A673 (cell line): ENCODE measurements at regions of chr17 and their contacts with region 1.

Region 1: DNA sequence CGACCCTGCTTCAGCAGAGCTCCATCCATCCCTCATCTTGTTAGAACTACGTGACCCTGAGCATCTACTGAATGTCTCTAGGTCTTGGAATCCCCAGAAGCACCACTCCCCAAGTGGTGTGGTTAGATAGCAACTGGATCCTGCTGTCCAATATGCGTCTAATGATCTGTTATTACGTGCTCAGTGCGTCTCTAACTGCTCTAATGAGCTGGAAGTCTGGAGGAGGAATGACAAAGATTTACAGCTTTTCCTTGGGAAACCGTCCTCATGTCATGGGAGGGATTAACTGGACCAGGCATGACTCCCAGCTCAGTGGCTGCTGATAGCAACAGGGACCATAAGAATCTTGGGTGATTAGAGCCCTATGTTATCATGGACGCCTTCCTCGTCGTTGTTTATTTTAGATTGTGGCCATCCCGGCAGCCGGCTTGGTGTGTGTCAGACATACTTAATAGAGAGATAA is 150.9 kb downstream of the HS3ST3B1 start:
- DNase-seq: no peak
- H3K4me3 ChIP-seq: no peak overlapping the region
- H3K27ac ChIP-seq: no peak overlapping the region
- H3K4me1 ChIP-seq: no peaks in the 10 kb centered on the region
- H3K27me3 ChIP-seq: no peaks in the 10 kb centered on the region
- CTCF ChIP-seq: no peak

Region 2: GRCh38 chr17:14396547-14396946 is 55.2 kb before region 1 on chr17:
- CTCF ChIA-PET with region 1: no interaction called
- POLR2A ChIA-PET with region 1: no interaction called
- intact Hi-C with region 1: loop called (anchors 10 kb)
- DNase-seq: no peak
- H3K4me3 ChIP-seq: no peak overlapping the region
- H3K27ac ChIP-seq: no peak overlapping the region
- H3K4me1 ChIP-seq: no peaks in the 10 kb centered on the region
- H3K27me3 ChIP-seq: no peaks in the 10 kb centered on the region
- CTCF ChIP-seq: no peak

Region 3: GRCh38 chr17:14672830-14673229 is 221.1 kb after region 1 on chr17:
- CTCF ChIA-PET with region 1: no interaction called
- POLR2A ChIA-PET with region 1: no interaction called
- intact Hi-C with region 1: no loop called
- DNase-seq: no peak
- H3K4me3 ChIP-seq: no peak overlapping the region
- H3K27ac ChIP-seq: no peak overlapping the region
- H3K4me1 ChIP-seq: no peaks in the 10 kb centered on the region
- H3K27me3 ChIP-seq: no peaks in the 10 kb centered on the region
- CTCF ChIP-seq: no peak